ENCODE measurements at regions of chr16 and their contacts with region 1.

Region 1: DNA sequence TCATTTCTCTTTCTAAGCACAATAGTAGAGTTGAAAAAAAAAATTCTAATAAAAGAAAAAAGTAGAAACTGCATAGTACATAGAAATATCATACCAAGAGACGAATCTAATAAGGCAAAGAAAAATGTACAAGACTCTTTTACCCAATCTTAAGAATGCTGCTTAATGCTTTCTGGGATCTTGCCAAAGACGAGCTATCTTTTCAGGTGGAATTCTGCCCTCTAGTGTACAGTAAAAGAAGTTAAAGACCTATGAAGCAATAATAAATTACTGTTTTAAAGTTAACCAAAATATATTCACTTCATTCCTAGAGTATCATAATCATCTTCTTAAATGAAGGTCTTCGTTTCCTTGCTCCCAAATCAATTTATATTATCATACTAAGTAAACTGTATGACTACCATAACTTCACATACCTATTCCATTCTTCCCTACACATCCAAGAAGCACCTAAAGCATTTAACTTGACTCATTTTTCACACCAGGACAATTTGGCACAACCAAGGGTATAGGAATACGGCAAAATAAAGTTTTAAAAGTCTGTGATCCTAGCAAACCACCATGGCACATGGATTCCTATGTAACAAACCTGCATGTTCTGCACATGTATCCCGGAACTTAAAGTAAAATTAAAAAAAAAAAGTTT is 47.7 kb downstream of the CFDP1 start:
- DNase-seq: peak; percentile 63
- H3K4me3 Mint-ChIP-seq: no peak overlapping the region
- H3K27ac Mint-ChIP-seq: no peak overlapping the region
- H3K4me1 Mint-ChIP-seq: peaks cover 10% of the 10 kb centered on the region
- H3K27me3 Mint-ChIP-seq: peaks cover 12% of the 10 kb centered on the region

Region 2: DNA sequence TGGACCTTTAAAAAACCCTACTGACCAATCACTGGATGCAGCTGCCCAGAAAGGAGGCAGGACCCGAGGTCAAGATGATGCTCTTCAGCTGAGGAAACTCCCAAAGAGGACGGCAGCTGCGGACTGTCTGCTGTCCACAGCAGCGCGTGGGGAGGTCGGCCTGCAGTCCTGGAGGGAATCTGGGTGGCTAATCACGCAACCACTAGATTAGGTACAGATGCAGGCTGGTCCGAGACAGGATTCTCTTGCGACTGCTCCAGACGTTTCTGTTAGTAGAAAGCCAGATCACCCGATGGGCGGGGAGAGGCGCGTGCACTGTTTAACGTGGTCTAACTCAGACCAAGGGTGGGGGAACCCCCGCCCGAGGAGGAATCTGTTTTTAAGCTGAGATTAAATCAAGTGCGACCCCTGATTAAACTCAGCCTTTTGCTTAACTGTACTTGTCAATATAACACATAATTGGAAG is 187.5 kb before region 1 on chr16:
- intact Hi-C with region 1: loop called (anchors 1 kb)
- DNase-seq: no peak
- H3K4me3 Mint-ChIP-seq: no peak overlapping the region
- H3K27ac Mint-ChIP-seq: no peak overlapping the region
- H3K4me1 Mint-ChIP-seq: peaks cover 16% of the 10 kb centered on the region
- H3K27me3 Mint-ChIP-seq: peaks cover 30% of the 10 kb centered on the region

Region 3: GRCh38 chr16:75238132-75238852 is 147.3 kb before region 1 on chr16:
- intact Hi-C with region 1: loop called (anchors 1 kb)
- DNase-seq: no peak
- H3K4me3 Mint-ChIP-seq: no peak overlapping the region
- H3K27ac Mint-ChIP-seq: no peak overlapping the region
- H3K4me1 Mint-ChIP-seq: peaks cover 2% of the 10 kb centered on the region
- H3K27me3 Mint-ChIP-seq: no peaks in the 10 kb centered on the region

Measured in activated CD4-positive, alpha-beta T cell treated with anti-CD3 and anti-CD28 coated beads, Interleukin-2, amount 10 ng/mL, durations not matched to agents 24 days and 14 days (primary cell).